Activated CD4-positive, alpha-beta T cell treated with anti-CD3 and anti-CD28 coated beads, Interleukin-2, amount 10 ng/mL, durations not matched to agents 7 days and 5 days (primary cell): ENCODE measurements at regions of chr20 and their contacts with region 1.

Region 1: GRCh38 chr20:31572701-31573554 is 32.2 kb upstream of the ID1 start:
- DNase-seq: peak; percentile 88
- H3K4me3 Mint-ChIP-seq: peak overlapping the region; percentile 86
- H3K27ac Mint-ChIP-seq: peak overlapping the region; percentile 91
- H3K4me1 Mint-ChIP-seq: peaks cover 27% of the 10 kb centered on the region
- H3K27me3 Mint-ChIP-seq: no peaks in the 10 kb centered on the region

Region 2: GRCh38 chr20:31555203-31555775 is 17.6 kb before region 1 on chr20:
- CTCF ChIA-PET with region 1: interaction called, 17 read pairs
- POLR2A ChIA-PET with region 1: no interaction called
- DNase-seq: no peak
- H3K4me3 Mint-ChIP-seq: no peak overlapping the region
- H3K27ac Mint-ChIP-seq: peak overlapping the region; percentile 68
- H3K4me1 Mint-ChIP-seq: peaks cover 6% of the 10 kb centered on the region
- H3K27me3 Mint-ChIP-seq: no peaks in the 10 kb centered on the region

Region 3: DNA sequence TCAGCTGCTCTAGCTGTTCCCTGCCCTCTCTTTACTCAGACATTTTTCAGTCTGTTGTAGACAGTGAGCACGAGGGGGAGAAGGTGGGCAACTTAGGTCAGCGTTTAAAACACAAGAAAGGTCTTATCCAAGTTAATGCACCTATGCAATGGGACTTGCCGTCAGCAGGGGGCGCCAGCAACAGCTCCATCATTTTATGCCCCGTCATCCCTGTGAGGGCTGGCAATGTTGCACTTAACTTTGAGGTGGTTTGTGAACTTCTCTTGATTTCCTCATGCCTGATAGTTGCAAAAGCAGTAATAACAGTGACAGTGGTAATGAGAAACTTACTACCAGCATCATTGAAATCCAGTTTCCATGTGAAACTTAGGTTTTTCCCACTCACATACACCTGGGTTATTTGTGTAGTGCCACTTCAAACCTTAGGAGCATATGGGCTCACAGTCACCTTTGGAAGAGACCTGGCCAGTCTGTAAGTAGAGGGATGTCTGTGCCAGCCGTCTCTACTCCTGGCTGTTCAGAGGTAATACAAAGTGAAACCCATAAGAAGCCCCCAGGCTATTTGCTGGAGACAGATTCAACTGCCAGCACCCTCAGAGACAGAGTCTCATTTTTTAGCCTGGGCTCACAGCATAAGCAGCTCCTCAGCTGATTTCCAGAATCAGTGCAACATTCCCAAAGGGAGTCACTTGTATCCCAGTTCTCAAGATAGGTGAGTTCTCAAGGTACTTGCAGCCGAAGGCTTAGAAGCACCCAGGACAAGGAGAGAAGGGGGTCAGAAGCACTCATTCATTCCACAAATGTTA is 12.6 kb before region 1 on chr20:
- CTCF ChIA-PET with region 1: interaction called, 17 read pairs
- POLR2A ChIA-PET with region 1: no interaction called
- DNase-seq: peak; percentile 83
- H3K4me3 Mint-ChIP-seq: no peak overlapping the region
- H3K27ac Mint-ChIP-seq: peak overlapping the region; percentile 78
- H3K4me1 Mint-ChIP-seq: peaks cover 7% of the 10 kb centered on the region
- H3K27me3 Mint-ChIP-seq: no peaks in the 10 kb centered on the region

Region 4: GRCh38 chr20:31593225-31594002 is 20.5 kb after region 1 on chr20:
- CTCF ChIA-PET with region 1: no interaction called
- POLR2A ChIA-PET with region 1: no interaction called
- DNase-seq: no peak
- H3K4me3 Mint-ChIP-seq: no peak overlapping the region
- H3K27ac Mint-ChIP-seq: no peak overlapping the region
- H3K4me1 Mint-ChIP-seq: peaks cover under 1% of the 10 kb centered on the region
- H3K27me3 Mint-ChIP-seq: peaks cover 8% of the 10 kb centered on the region

Region 5: GRCh38 chr20:31605031-31605901 is 32.3 kb after region 1 on chr20 and contains the start of gene ID1:
- CTCF ChIA-PET with region 1: interaction called, 115 read pairs
- POLR2A ChIA-PET with region 1: interaction called, 9 read pairs
- DNase-seq: peak; percentile 92
- H3K4me3 Mint-ChIP-seq: peak within 1 kb of the TSS; percentile 84
- H3K27ac Mint-ChIP-seq: peak within 1 kb of the TSS; percentile 61
- H3K4me1 Mint-ChIP-seq: peaks cover 29% of the 10 kb centered on the region
- H3K27me3 Mint-ChIP-seq: peaks cover 46% of the 10 kb centered on the region
- total RNA-seq, gene ID1: 0.85 to 1.4 TPM

Region 6: GRCh38 chr20:31652917-31653396 is 80.0 kb after region 1 on chr20:
- CTCF ChIA-PET with region 1: no interaction called
- POLR2A ChIA-PET with region 1: no interaction called
- DNase-seq: no peak
- H3K4me3 Mint-ChIP-seq: no peak overlapping the region
- H3K27ac Mint-ChIP-seq: no peak overlapping the region
- H3K4me1 Mint-ChIP-seq: no peaks in the 10 kb centered on the region
- H3K27me3 Mint-ChIP-seq: peaks cover 11% of the 10 kb centered on the region